OCI-LY7 (cell line): ENCODE measurements at regions of chr2 and their contacts with region 1.

Region 1: GRCh38 chr2:47272031-47272864 is 117.1 kb upstream of the STPG4 start:
- DNase-seq: peak; percentile 29
- H3K4me3 ChIP-seq: peak overlapping the region; percentile 47
- H3K27ac ChIP-seq: no peak overlapping the region
- H3K4me1 ChIP-seq: peaks cover 14% of the 10 kb centered on the region
- CTCF ChIP-seq: peak; percentile 90

Region 2: DNA sequence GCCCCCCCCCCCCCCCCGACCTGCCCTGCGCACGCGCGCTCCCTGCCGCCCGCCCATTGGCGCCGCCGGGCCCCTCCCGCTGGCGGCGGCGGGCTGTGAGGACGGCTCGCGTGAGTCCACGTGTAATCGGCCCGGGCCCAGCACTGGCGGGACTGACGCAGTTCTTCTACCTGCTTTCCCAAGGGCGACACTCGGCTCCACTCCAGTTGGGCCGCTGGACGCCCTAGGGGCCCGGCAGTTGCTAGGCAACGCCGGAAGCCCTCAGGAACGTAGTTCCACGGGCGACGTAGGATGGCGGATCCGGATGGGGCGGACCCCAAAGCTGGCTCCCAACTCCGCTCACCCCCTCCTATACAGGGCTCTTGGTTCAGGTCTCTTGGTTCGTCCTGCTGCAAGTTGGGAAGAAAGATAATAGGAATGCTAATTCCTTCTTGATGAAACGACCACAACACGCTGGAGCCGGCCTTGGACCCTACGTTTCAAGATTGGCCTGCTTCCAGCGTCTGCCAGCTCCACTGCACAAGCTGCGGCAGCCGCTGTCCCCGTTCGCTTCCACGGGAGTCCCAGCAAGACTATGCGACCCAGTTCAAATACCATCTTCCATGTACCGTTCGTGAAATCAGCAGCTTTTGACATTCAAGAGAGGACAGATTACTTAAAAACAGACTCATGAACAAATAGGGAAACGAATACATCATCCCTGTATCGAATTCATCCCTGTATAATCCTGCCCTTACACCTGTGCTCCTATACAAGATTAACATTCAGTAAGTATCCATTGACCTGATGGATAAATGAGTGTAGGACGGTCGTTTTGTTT is 356.2 kb before region 1 on chr2:
- CTCF ChIA-PET with region 1: no interaction called
- POLR2A ChIA-PET with region 1: no interaction called
- intact Hi-C with region 1: loop called (anchors 5 kb)
- DNase-seq: peak; percentile 81
- H3K4me3 ChIP-seq: peak overlapping the region; percentile 84
- H3K27ac ChIP-seq: peak overlapping the region; percentile 52
- H3K4me1 ChIP-seq: peaks cover 46% of the 10 kb centered on the region
- CTCF ChIP-seq: no peak

Region 3: DNA sequence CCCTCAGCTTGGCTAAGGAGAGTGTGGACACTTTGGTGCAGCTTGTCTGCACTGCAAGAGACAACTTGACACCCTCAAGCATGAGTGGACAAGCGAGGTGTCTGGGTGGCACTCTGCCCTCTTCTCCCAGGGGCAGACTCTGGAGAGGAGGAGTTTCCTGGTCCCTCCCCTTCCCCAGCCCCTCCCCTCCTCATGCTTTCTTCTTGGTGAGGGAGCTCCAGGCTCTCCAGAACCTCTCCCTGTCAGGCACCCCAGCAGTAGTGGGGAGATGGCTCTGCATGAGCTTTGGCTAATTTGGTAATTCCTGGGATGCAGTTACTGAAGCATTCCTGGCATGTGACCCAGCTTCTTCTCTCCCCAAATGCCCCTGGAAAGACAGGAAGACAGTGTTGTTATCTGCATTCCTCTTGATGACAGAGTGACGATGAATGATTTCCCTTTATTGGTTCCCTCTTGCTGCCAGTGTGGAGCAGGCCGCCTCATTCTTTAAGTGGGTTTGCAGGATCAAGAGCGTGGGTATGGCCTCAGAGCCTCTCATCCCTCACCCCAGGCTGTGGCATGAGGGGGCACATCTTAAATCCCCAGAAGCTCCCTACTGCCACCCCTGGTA is 206.4 kb before region 1 on chr2:
- CTCF ChIA-PET with region 1: interaction called, 17 read pairs
- POLR2A ChIA-PET with region 1: no interaction called
- intact Hi-C with region 1: no loop called
- DNase-seq: no peak
- H3K4me3 ChIP-seq: no peak overlapping the region
- H3K27ac ChIP-seq: no peak overlapping the region
- H3K4me1 ChIP-seq: no peaks in the 10 kb centered on the region
- CTCF ChIP-seq: no peak

Region 4: GRCh38 chr2:47162780-47163179 is 109.5 kb before region 1 on chr2:
- CTCF ChIA-PET with region 1: no interaction called
- POLR2A ChIA-PET with region 1: no interaction called
- intact Hi-C with region 1: no loop called
- DNase-seq: no peak
- H3K4me3 ChIP-seq: no peak overlapping the region
- H3K27ac ChIP-seq: no peak overlapping the region
- H3K4me1 ChIP-seq: peaks cover under 1% of the 10 kb centered on the region
- CTCF ChIP-seq: no peak

Region 5: DNA sequence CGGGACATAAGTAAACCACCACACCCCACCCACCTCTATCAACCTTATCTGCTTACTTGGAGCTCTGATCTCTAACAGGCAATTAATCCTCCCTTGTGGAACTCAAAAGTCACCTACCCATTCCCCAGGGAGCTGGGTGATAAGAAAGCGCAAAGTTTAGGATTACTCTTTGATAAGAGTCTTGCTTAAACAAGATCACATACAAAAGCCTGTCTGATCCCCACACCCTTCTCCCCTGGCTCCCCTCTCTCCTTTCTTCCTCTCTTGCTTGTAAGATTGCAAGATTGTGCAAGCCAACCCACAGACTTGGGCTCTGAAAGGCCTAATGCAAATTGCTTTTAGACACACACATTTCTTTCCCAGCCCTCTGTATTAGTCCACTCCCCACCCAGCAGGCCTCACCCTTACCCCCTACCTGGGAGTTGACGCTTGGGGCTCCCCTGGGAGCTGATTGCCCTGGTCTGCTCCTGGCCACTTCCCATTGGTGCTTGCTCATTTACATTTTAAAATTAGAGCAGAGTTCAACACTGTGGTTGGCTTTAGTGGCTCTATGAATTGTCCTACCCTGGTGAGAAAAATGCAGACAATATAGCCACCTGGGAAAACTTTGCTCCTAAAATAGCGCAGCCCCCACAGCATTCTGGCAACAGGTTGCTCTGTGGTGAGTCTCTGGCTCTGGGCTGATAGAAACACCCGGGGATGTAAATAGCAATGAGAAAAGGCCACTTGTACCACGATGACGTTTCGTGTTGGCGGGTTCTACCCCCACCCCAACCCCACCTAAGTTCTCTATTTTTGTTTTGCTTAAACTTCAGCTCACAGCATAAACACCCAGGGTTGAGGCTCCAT is 37.9 kb after region 1 on chr2:
- CTCF ChIA-PET with region 1: no interaction called
- POLR2A ChIA-PET with region 1: no interaction called
- intact Hi-C with region 1: no loop called
- DNase-seq: peak; percentile 18
- H3K4me3 ChIP-seq: no peak overlapping the region
- H3K27ac ChIP-seq: no peak overlapping the region
- H3K4me1 ChIP-seq: peaks cover 13% of the 10 kb centered on the region
- CTCF ChIP-seq: no peak

Region 6: GRCh38 chr2:47992671-47993070 is 720.4 kb after region 1 on chr2:
- CTCF ChIA-PET with region 1: no interaction called
- POLR2A ChIA-PET with region 1: no interaction called
- intact Hi-C with region 1: no loop called
- DNase-seq: no peak
- H3K4me3 ChIP-seq: no peak overlapping the region
- H3K27ac ChIP-seq: no peak overlapping the region
- H3K4me1 ChIP-seq: no peaks in the 10 kb centered on the region
- CTCF ChIP-seq: no peak